ENCODE measurements at regions of chr4 and their contacts with region 1.

Region 1: GRCh38 chr4:67700738-67701516 is at the start of gene UBA6:
- DNase-seq: peak; percentile 98 to 99
- ATAC-seq: peak; percentile 99
- H3K4me3 ChIP-seq: peak within 1 kb of the TSS; percentile 92 to 94
- H3K27ac ChIP-seq: peak within 1 kb of the TSS; percentile 66 to 89
- H3K4me1 ChIP-seq: no peaks in the 10 kb centered on the region
- H3K27me3 ChIP-seq: no peaks in the 10 kb centered on the region
- total RNA-seq, gene UBA6: 43.4 to 63.2 TPM

Region 2: DNA sequence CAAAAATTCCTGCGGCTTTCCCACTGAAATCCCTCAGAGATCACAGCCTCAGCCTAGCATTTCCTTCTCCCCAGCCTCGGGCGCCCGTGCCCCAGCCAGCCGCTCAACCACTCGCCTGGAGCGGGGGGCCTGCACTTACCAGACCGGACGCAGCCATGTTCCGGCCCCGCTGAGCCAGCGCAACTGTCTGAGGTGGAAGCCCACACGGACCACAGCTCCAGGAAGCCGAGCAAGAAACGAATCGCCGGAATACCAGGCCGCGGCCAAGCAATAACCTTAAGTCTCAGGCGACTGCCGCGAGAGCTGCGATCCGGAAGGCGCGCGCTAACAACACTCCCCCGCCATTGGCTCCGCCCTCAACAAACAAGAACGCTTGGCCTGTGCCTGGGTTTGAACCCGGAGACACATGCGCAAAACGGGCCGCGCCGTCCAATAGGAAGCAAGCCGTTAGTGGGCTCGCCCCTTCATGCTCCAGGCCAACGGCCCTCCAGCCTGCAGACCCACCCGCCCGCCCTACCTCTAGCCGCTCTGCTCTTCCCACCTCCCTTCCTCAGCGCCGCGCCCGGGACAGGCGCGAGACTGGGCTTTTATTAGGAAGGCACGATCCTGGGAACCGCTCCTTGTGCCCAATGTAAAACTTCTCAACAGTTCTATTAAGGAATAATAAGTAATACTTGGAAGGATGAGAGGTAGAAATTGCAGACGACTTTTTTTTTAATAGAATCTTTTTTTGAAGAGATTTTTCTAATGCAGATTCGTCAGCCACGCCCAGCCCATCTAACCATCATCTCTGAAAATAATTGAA is 155.5 kb before region 1 on chr4 and contains the start of gene CENPC:
- intact Hi-C with region 1: loop called in 1 of 2 experiments (anchors 5 kb)
- DNase-seq: peak; percentile 98
- ATAC-seq: peak; percentile 99
- H3K4me3 ChIP-seq: peak within 1 kb of the TSS; percentile 86 to 90
- H3K27ac ChIP-seq: peak within 1 kb of the TSS; percentile 68 to 97
- H3K4me1 ChIP-seq: peaks cover 0 to 3% of the 10 kb centered on the region in 2 donors
- H3K27me3 ChIP-seq: no peaks in the 10 kb centered on the region
- total RNA-seq, gene CENPC: 21.7 to 41.6 TPM

Region 3: DNA sequence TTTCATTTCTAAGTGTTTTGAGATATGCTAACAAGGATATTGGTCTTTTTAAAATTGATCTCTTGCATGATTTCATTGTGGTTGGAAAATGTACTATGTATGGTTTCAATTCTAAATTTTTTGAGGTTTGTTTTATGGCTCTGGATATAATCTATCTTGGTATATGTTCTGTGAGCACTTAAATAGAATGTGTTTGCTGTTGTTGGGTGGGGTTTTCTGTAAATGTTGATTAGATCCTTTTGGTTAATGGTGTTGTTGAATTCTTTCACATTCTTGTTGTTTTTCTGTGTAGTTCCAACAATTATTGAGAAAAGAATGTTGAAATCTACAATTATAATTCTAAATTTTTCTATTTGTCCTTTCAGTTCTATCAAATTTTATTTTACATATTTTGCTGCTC is 95.9 kb after region 1 on chr4:
- intact Hi-C with region 1: no loop called
- DNase-seq: no peak
- ATAC-seq: no peak
- H3K4me3 ChIP-seq: no peak overlapping the region
- H3K27ac ChIP-seq: no peak overlapping the region
- H3K4me1 ChIP-seq: no peaks in the 10 kb centered on the region
- H3K27me3 ChIP-seq: no peaks in the 10 kb centered on the region

Region 4: GRCh38 chr4:67853336-67853735 is 152.4 kb after region 1 on chr4:
- intact Hi-C with region 1: no loop called
- DNase-seq: no peak
- ATAC-seq: no peak
- H3K4me3 ChIP-seq: no peak overlapping the region
- H3K27ac ChIP-seq: no peak overlapping the region
- H3K4me1 ChIP-seq: no peaks in the 10 kb centered on the region
- H3K27me3 ChIP-seq: no peaks in the 10 kb centered on the region

Region 5: DNA sequence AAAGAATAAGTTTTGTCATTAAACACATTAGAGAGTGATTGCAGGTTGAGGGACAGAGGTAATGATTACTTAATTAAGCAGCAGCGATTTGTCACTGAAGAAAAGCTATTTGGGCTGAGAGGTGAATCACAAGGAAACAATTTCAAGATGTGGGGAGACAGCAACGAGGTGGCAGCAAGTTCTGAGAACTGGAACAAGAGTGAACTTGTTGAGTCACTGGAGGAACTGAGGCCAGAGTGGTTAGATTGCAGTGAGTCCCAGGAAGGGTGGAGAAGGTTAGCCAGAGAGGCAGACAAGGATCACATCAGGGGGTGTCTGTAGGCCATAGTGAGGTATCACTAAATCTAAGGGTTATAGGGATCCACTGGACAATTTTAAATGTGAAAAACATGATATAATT is 320.3 kb after region 1 on chr4:
- intact Hi-C with region 1: no loop called
- DNase-seq: no peak
- ATAC-seq: no peak
- H3K4me3 ChIP-seq: no peak overlapping the region
- H3K27ac ChIP-seq: no peak overlapping the region
- H3K4me1 ChIP-seq: no peaks in the 10 kb centered on the region
- H3K27me3 ChIP-seq: no peaks in the 10 kb centered on the region